ENCODE measurements at regions of chr6 and their contacts with region 1.

Region 1: DNA sequence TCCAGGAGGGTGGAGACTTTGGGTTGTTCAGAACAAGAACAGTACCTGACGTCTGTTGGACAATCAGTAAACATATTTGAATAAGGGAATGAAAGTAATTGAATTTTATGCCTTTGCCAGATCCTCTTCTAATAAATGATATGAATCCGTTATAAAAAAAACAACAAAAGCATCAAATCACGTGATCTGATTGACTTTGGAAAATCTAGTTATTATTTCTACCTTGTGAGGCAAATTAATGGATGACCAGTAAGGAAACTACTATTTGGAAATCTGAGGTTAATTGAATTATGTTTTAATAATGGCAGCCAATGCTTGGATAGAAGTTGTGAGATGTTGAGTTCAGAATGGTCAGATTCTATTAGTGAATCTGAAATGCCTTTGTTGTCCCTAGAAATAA is 399.5 kb downstream of the TFAP2B start:
- DNase-seq: no peak
- H3K4me3 ChIP-seq: no peak overlapping the region
- H3K27ac ChIP-seq: no peak overlapping the region
- H3K4me1 ChIP-seq: no peaks in the 10 kb centered on the region
- H3K27me3 ChIP-seq: no peaks in the 10 kb centered on the region
- CTCF ChIP-seq: no peak
- POLR2A ChIP-seq: no peak

Region 2: GRCh38 chr6:49772285-49772684 is 1445.9 kb before region 1 on chr6:
- intact Hi-C with region 1: no loop called
- DNase-seq: no peak
- H3K4me3 ChIP-seq: no peak overlapping the region
- H3K27ac ChIP-seq: no peak overlapping the region
- H3K4me1 ChIP-seq: no peaks in the 10 kb centered on the region
- H3K27me3 ChIP-seq: no peaks in the 10 kb centered on the region
- CTCF ChIP-seq: no peak
- POLR2A ChIP-seq: no peak

Region 3: GRCh38 chr6:51277474-51277873 is 59.3 kb after region 1 on chr6:
- intact Hi-C with region 1: no loop called
- DNase-seq: no peak
- H3K4me3 ChIP-seq: no peak overlapping the region
- H3K27ac ChIP-seq: no peak overlapping the region
- H3K4me1 ChIP-seq: no peaks in the 10 kb centered on the region
- H3K27me3 ChIP-seq: no peaks in the 10 kb centered on the region
- CTCF ChIP-seq: no peak
- POLR2A ChIP-seq: no peak

Region 4: DNA sequence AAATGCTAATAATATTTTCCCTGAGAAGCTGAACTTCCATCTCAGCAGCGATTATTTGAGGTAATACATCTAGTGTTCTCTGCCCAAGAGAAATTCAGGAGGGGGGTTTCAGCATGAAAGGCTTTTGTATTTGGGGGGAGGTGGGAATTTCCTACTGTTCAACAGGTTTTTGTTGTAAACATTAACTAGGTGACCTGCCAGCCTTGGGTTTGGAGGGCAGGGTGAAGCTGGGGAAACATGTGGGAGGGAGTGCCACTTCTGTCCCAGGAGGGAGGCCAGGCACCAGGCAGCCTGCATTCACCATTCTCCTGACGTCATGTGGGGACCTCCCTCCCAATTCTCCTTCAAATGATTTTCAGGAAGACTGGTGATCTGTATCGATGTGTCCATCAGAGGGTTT is 907.0 kb after region 1 on chr6:
- intact Hi-C with region 1: loop called (anchors 10 kb)
- DNase-seq: no peak
- H3K4me3 ChIP-seq: no peak overlapping the region
- H3K27ac ChIP-seq: no peak overlapping the region
- H3K4me1 ChIP-seq: no peaks in the 10 kb centered on the region
- H3K27me3 ChIP-seq: no peaks in the 10 kb centered on the region
- CTCF ChIP-seq: no peak
- POLR2A ChIP-seq: no peak

Measured in breast epithelium (tissue), 4 donors.